ENCODE measurements at regions of chr15 and their contacts with region 1.

Region 1: GRCh38 chr15:29139540-29140459 is 129.8 kb downstream of the NSMCE3 start:
- DNase-seq: peak; percentile 93
- H3K4me3 ChIP-seq: peak overlapping the region in 1 of 2 experiments; percentile 44; a peak in 1 of 4 replicates
- H3K27ac ChIP-seq: no peak overlapping the region
- H3K4me1 ChIP-seq: peaks cover 0 to 13% of the 10 kb centered on the region in 2 experiments; a peak in 1 of 4 replicates
- H3K27me3 ChIP-seq: peaks cover 5% of the 10 kb centered on the region; the same call in 1 of the 2 replicates
- CTCF ChIP-seq: peak; percentile 71
- EP300 ChIP-seq: no peak
- RAD21 ChIP-seq: peak; percentile 74

Region 2: GRCh38 chr15:29124581-29125381 is 15.0 kb before region 1 on chr15:
- CTCF ChIA-PET with region 1: interaction called, 35 read pairs
- POLR2A ChIA-PET with region 1: no interaction called
- DNase-seq: no peak
- H3K4me3 ChIP-seq: no peak overlapping the region
- H3K27ac ChIP-seq: no peak overlapping the region
- H3K4me1 ChIP-seq: peaks cover 0 to 15% of the 10 kb centered on the region in 2 experiments; a peak in 1 of 4 replicates
- H3K27me3 ChIP-seq: no peaks in the 10 kb centered on the region
- CTCF ChIP-seq: no peak
- EP300 ChIP-seq: no peak
- RAD21 ChIP-seq: 0 out of 2 replicates have a peak, but pooled peaks have one; percentile 26

Region 3: GRCh38 chr15:29156521-29156920 is 16.7 kb after region 1 on chr15:
- CTCF ChIA-PET with region 1: interaction called, 24 read pairs
- POLR2A ChIA-PET with region 1: no interaction called
- DNase-seq: no peak
- H3K4me3 ChIP-seq: no peak overlapping the region
- H3K27ac ChIP-seq: no peak overlapping the region
- H3K4me1 ChIP-seq: no peaks in the 10 kb centered on the region
- H3K27me3 ChIP-seq: no peaks in the 10 kb centered on the region
- CTCF ChIP-seq: no peak
- EP300 ChIP-seq: no peak
- RAD21 ChIP-seq: no peak

Region 4: GRCh38 chr15:29162411-29162810 is 22.6 kb after region 1 on chr15:
- CTCF ChIA-PET with region 1: interaction called, 12 read pairs
- POLR2A ChIA-PET with region 1: no interaction called
- DNase-seq: no peak
- H3K4me3 ChIP-seq: no peak overlapping the region
- H3K27ac ChIP-seq: no peak overlapping the region
- H3K4me1 ChIP-seq: no peaks in the 10 kb centered on the region
- H3K27me3 ChIP-seq: no peaks in the 10 kb centered on the region
- CTCF ChIP-seq: no peak
- EP300 ChIP-seq: no peak
- RAD21 ChIP-seq: no peak

Region 5: GRCh38 chr15:29568838-29569532 is 429.2 kb after region 1 on chr15:
- CTCF ChIA-PET with region 1: interaction called, 13 read pairs
- POLR2A ChIA-PET with region 1: no interaction called
- DNase-seq: peak; percentile 59
- H3K4me3 ChIP-seq: no peak overlapping the region
- H3K27ac ChIP-seq: no peak overlapping the region
- H3K4me1 ChIP-seq: peaks cover 0 to 4% of the 10 kb centered on the region in 2 experiments; a peak in 1 of 4 replicates
- H3K27me3 ChIP-seq: peaks cover 55% of the 10 kb centered on the region
- CTCF ChIP-seq: peak; percentile 18; the same call in 1 of the 2 replicates
- EP300 ChIP-seq: no peak
- RAD21 ChIP-seq: peak; percentile 38

Measured in SK-N-SH (cell line).